ENCODE measurements at regions of chr3 and their contacts with region 1.

Region 1: DNA sequence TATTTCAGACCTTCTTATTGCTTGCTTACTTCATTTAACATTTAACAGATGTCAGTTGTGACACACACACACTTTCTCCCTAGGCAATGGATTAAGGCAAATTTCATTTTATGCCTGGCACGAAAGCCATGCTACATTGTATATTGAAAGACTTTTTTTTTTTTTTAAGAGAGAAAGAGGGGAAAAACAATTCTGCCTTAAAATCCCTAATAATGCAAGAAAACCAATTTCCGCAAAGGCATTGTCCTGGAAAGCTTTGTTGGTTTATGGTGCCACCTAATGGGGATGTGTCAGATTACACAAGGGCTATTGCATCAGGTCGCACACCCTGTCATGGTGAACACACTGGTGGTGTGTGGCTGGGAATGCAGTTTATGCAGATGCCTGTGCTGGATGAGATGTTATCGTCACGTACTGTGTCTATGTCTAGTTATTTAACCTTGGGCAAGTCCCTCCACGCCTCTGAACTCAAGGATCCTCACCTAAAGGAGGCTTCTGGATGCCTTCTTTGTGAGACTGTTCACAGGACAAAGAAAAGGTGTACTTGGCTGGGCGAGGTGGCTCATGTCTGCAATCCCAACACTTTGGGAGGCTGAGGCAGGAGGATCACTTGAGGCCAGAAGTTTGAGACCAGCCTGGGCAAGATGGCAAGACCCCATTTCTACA is 37.3 kb upstream of the RFTN1 start:
- DNase-seq: peak; percentile 88
- ATAC-seq: peak; percentile 99
- H3K4me3 Mint-ChIP-seq: no peak overlapping the region
- H3K27ac Mint-ChIP-seq: peak overlapping the region; percentile 90
- H3K4me1 Mint-ChIP-seq: peaks cover 22% of the 10 kb centered on the region
- H3K27me3 Mint-ChIP-seq: peaks cover 11% of the 10 kb centered on the region

Region 2: GRCh38 chr3:16270855-16271254 is 280.0 kb before region 1 on chr3:
- CTCF ChIA-PET with region 1: interaction called, 27 read pairs
- POLR2A ChIA-PET with region 1: no interaction called
- DNase-seq: no peak
- ATAC-seq: no peak
- H3K4me3 Mint-ChIP-seq: no peak overlapping the region
- H3K27ac Mint-ChIP-seq: no peak overlapping the region
- H3K4me1 Mint-ChIP-seq: peaks cover 22% of the 10 kb centered on the region
- H3K27me3 Mint-ChIP-seq: no peaks in the 10 kb centered on the region